ENCODE measurements at regions of chr3 and their contacts with region 1.

Region 1: GRCh38 chr3:48635222-48636021 is at the start of gene SLC26A6:
- DNase-seq: peak; percentile 98 to 99
- ATAC-seq: peak; percentile 99
- H3K4me3 ChIP-seq: peak within 1 kb of the TSS; percentile 73 to 86
- H3K27ac ChIP-seq: peak within 1 kb of the TSS in 1 of 2 donors; percentile 65
- H3K4me1 ChIP-seq: no peaks in the 10 kb centered on the region
- H3K27me3 ChIP-seq: no peaks in the 10 kb centered on the region
- total RNA-seq, gene SLC26A6: 30.7 to 33.6 TPM

Region 2: GRCh38 chr3:48465531-48466378 is 169.7 kb before region 1 on chr3:
- intact Hi-C with region 1: loop called in 1 of 2 experiments (anchors 10 kb)
- DNase-seq: peak; percentile 98 to 99
- ATAC-seq: peak; percentile 96
- H3K4me3 ChIP-seq: peak overlapping the region in 1 of 2 donors; percentile 26
- H3K27ac ChIP-seq: peak overlapping the region; percentile 50 to 94
- H3K4me1 ChIP-seq: no peaks in the 10 kb centered on the region
- H3K27me3 ChIP-seq: no peaks in the 10 kb centered on the region

Region 3: GRCh38 chr3:48556793-48557626 is 78.4 kb before region 1 on chr3 and contains the start of gene PFKFB4:
- intact Hi-C with region 1: loop called in 1 of 2 experiments (anchors 1 kb)
- DNase-seq: peak; percentile 99 to 100
- ATAC-seq: peak; percentile 95
- H3K4me3 ChIP-seq: peak within 1 kb of the TSS; percentile 12 to 59
- H3K27ac ChIP-seq: peak within 1 kb of the TSS in 1 of 2 donors; percentile 29
- H3K4me1 ChIP-seq: peaks cover 0 to 3% of the 10 kb centered on the region in 2 donors
- H3K27me3 ChIP-seq: no peaks in the 10 kb centered on the region
- total RNA-seq, gene PFKFB4: 7.2 to 14.6 TPM

Region 4: DNA sequence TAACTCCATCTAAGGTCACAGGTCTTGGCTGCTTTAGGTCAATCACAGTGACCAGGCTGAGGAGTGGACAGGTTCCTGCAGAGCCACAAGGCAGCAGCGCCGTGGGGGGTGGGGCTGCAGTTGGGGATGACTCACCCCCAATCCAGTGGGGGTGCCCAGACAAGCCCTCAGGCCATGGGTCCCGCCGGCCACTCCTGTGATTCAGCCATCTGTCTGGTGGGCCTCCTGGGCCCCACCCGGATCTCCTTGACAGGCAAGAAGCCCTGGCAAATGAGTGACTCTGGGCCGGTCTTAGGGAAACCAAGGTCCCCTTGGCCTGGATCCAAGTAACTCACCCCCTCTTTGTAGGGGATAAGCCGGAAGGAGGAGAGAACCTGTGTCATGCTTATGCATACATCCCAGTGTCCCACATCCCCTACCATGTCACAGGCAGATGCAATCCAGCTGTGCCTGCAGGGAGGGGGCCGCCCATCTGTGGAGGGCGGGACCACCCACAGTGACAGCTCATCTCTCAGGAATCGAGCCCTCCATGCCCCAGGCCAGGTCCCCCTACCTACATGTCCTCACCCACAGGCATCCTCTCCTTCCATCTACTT is 39.8 kb before region 1 on chr3:
- intact Hi-C with region 1: loop called in 1 of 2 experiments (anchors 5 kb)
- DNase-seq: peak; percentile 78 to 89
- ATAC-seq: no peak
- H3K4me3 ChIP-seq: no peak overlapping the region
- H3K27ac ChIP-seq: no peak overlapping the region
- H3K4me1 ChIP-seq: no peaks in the 10 kb centered on the region
- H3K27me3 ChIP-seq: no peaks in the 10 kb centered on the region

Region 5: GRCh38 chr3:48619541-48620517 is 15.6 kb before region 1 on chr3:
- intact Hi-C with region 1: loop called in 1 of 2 experiments (anchors 2 kb)
- DNase-seq: no peak
- ATAC-seq: no peak
- H3K4me3 ChIP-seq: no peak overlapping the region
- H3K27ac ChIP-seq: peak overlapping the region; percentile 81 to 96
- H3K4me1 ChIP-seq: peaks cover 0 to 5% of the 10 kb centered on the region in 2 donors
- H3K27me3 ChIP-seq: no peaks in the 10 kb centered on the region

Region 6: GRCh38 chr3:48656061-48656840 is 20.8 kb after region 1 on chr3:
- intact Hi-C with region 1: loop called in 1 of 2 experiments (anchors 1 kb)
- DNase-seq: peak; percentile 91 to 95
- ATAC-seq: peak; percentile 88
- H3K4me3 ChIP-seq: peak overlapping the region; percentile 15 to 43
- H3K27ac ChIP-seq: peak overlapping the region in 1 of 2 donors; percentile 3
- H3K4me1 ChIP-seq: no peaks in the 10 kb centered on the region
- H3K27me3 ChIP-seq: no peaks in the 10 kb centered on the region